Activated CD4-positive, alpha-beta T cell treated with anti-CD3 and anti-CD28 coated beads, Interleukin-2, amount 10 ng/mL, durations not matched to agents 24 days and 14 days (primary cell): ENCODE measurements at regions of chr15 and their contacts with region 1.

Region 1: DNA sequence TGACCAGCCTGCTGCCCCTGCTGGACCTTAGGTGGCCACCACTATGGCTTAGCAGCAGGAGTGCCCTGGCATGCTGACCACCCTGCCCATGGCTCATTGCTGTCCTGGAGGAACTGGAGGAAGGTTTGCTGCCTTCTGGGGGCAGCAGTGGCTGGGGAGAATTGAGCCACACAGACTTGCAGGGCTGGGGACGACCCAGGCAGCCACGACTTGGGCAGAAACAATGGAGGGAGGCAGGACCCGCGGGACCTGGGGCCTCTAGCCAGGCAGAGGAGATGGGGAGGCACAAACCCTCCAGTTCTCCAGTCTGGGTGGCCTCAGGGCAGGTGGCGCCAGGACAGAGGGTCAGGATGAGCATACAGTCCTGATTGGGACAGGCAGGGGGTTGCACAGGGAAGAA is 32.8 kb downstream of the ADAMTS7 start:
- DNase-seq: no peak
- H3K4me3 Mint-ChIP-seq: no peak overlapping the region
- H3K27ac Mint-ChIP-seq: no peak overlapping the region
- H3K4me1 Mint-ChIP-seq: peaks cover 2% of the 10 kb centered on the region
- H3K27me3 Mint-ChIP-seq: no peaks in the 10 kb centered on the region

Region 2: DNA sequence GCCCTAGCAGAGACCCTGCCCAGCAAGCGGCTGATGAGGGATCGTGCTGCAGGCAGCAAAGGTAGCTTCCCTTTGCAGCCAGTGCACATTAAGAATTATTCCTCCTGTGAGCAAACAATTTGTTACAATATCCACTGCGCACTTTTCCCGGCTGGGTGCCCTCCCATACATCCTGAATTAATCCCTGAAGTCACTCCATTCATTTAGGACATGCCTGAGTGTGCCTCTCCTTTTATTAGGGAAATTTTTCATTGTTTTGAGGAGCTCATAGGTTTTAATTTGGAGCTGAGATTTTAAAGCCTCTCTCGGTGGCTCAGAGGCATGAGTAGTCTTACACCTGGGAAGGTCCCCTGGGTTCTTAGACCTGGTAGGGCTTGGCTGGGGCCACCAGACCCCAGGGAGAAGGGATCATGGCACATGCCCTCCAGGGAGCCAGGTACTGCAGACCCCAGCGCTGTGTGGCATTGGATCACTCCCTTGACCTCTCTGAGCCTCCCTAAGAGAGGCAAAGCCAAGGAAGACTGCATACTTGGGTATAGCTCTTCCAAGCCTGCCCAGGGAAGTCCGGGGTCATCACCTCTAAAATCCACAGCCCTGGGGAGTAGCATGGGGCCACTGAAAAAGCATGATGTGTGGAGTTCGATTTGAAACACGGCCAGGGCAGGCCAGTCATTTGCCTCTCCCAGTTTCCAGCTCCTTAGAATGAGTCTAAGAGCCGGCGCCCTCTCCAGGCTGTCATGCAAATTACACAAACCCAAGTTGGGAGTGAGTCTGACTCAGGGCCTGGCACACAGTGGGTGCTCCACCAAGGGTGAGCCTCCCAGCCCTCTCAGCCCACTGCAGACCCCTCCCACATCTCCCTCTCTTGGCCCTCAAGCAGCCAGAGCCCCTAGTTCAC is 993.8 kb before region 1 on chr15:
- intact Hi-C with region 1: no loop called
- DNase-seq: peak; percentile 59
- H3K4me3 Mint-ChIP-seq: no peak overlapping the region
- H3K27ac Mint-ChIP-seq: no peak overlapping the region
- H3K4me1 Mint-ChIP-seq: no peaks in the 10 kb centered on the region
- H3K27me3 Mint-ChIP-seq: no peaks in the 10 kb centered on the region

Region 3: DNA sequence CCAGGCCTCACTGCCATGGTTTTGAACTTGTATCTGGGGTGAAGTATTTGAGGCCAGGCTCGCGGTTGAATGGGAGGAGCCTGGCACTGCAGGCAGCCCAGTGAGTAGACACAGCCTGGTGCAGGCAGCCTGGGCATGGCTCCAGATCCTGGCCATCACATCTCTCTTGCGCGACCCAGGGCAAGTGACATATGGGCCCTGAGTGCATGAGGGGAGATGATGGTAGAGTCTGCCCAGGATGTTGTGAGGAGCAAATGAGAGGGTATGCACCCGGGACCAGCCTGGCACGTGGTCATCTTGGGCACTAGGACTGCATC is 804.4 kb before region 1 on chr15:
- intact Hi-C with region 1: loop called (anchors 10 kb)
- DNase-seq: no peak
- H3K4me3 Mint-ChIP-seq: no peak overlapping the region
- H3K27ac Mint-ChIP-seq: no peak overlapping the region
- H3K4me1 Mint-ChIP-seq: no peaks in the 10 kb centered on the region
- H3K27me3 Mint-ChIP-seq: peaks cover 9% of the 10 kb centered on the region